Activated naive CD4-positive, alpha-beta T cell treated with anti-CD3 and anti-CD28 coated beads for 36 hours (primary cell): ENCODE measurements at regions of chr15 and their contacts with region 1.

Region 1: DNA sequence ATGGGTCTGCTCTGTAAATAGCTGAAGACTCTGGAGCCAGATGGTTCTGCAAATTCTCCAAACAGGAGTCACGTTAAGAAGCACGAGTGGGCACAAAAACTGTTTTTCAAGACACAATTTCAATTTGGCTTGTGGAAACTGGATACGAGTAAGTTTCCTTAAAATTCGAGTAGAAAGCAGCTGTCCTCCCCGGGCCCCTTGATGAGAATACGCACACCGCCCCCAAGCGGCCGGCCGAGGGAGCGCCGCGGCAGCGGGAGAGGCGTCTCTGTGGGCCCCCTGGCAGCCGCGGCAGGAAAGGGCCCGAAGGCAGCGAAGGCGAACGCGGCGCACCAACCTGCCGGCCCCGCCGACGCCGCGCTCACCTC is 778 bp upstream of the THBS1 start:
- DNase-seq: peak; percentile 92
- H3K4me3 Mint-ChIP-seq: peak overlapping the region; percentile 44
- H3K27ac Mint-ChIP-seq: no peak overlapping the region
- H3K4me1 Mint-ChIP-seq: peaks cover 9% of the 10 kb centered on the region
- H3K27me3 Mint-ChIP-seq: peaks cover 50% of the 10 kb centered on the region

Region 2: GRCh38 chr15:38707802-38708671 is 872.1 kb before region 1 on chr15:
- CTCF ChIA-PET with region 1: interaction called, 3 read pairs
- intact Hi-C with region 1: loop called (anchors 2 kb)
- DNase-seq: peak; percentile 53
- H3K4me3 Mint-ChIP-seq: no peak overlapping the region
- H3K27ac Mint-ChIP-seq: no peak overlapping the region
- H3K4me1 Mint-ChIP-seq: no peaks in the 10 kb centered on the region
- H3K27me3 Mint-ChIP-seq: no peaks in the 10 kb centered on the region

Region 3: GRCh38 chr15:39125904-39126303 is 454.2 kb before region 1 on chr15:
- CTCF ChIA-PET with region 1: interaction called, 9 read pairs
- intact Hi-C with region 1: loop called (anchors 1 kb)
- DNase-seq: peak; percentile 47
- H3K4me3 Mint-ChIP-seq: no peak overlapping the region
- H3K27ac Mint-ChIP-seq: no peak overlapping the region
- H3K4me1 Mint-ChIP-seq: no peaks in the 10 kb centered on the region
- H3K27me3 Mint-ChIP-seq: peaks cover 6% of the 10 kb centered on the region

Region 4: GRCh38 chr15:39312984-39313383 is 267.1 kb before region 1 on chr15:
- CTCF ChIA-PET with region 1: no interaction called
- intact Hi-C with region 1: loop called (anchors 2 kb)
- DNase-seq: peak; percentile 5
- H3K4me3 Mint-ChIP-seq: no peak overlapping the region
- H3K27ac Mint-ChIP-seq: no peak overlapping the region
- H3K4me1 Mint-ChIP-seq: no peaks in the 10 kb centered on the region
- H3K27me3 Mint-ChIP-seq: peaks cover 8% of the 10 kb centered on the region

Region 5: GRCh38 chr15:39874890-39875549 is 294.9 kb after region 1 on chr15:
- CTCF ChIA-PET with region 1: no interaction called
- intact Hi-C with region 1: loop called (anchors 5 kb)
- DNase-seq: peak; percentile 54
- H3K4me3 Mint-ChIP-seq: no peak overlapping the region
- H3K27ac Mint-ChIP-seq: no peak overlapping the region
- H3K4me1 Mint-ChIP-seq: peaks cover 4% of the 10 kb centered on the region
- H3K27me3 Mint-ChIP-seq: peaks cover 2% of the 10 kb centered on the region

Region 6: DNA sequence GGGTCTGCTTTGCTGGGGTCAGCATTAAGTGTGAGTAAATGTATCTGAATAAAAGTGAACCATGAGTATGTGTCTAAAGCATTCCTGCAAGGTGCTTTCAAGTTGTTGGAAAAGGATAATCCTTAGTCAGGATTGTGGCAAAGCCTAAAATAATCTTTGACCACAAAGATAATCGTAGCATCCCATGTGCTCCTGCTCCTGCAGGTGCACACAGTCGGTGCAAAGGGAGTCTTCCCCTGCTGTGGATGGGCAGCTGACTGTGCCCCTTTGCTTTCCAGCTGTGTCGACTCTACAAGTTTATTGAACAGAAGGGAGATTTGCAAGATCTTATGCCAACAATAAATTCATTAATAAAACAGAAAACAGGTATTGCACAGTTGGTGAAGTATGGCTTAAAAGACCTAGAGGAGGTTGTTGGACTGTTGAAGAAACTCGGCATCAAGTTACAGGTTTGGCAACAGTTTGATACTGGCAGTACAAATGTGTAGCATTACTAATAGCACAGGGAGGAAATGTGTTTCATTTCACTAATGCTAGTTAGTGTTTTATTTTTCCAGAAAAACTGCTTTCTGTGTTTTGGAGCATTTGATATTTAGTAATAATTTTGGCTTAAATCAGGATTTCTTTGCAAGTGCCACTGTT is 436.2 kb after region 1 on chr15:
- CTCF ChIA-PET with region 1: no interaction called
- intact Hi-C with region 1: no loop called
- DNase-seq: no peak
- H3K4me3 Mint-ChIP-seq: no peak overlapping the region
- H3K27ac Mint-ChIP-seq: no peak overlapping the region
- H3K4me1 Mint-ChIP-seq: no peaks in the 10 kb centered on the region
- H3K27me3 Mint-ChIP-seq: no peaks in the 10 kb centered on the region